CD4-positive, alpha-beta T cell (primary cell): ENCODE measurements at regions of chr1 and their contacts with region 1.

Region 1: GRCh38 chr1:27154991-27155781 is at the start of gene SLC9A1:
- DNase-seq: peak; percentile 86 to 97 (median 92)
- ATAC-seq: peak; percentile 93
- H3K4me3 ChIP-seq: peak within 1 kb of the TSS; percentile 93
- H3K4me3 Mint-ChIP-seq: peak within 1 kb of the TSS; percentile 89
- H3K27ac ChIP-seq: peak within 1 kb of the TSS; percentile 84 to 87
- H3K27ac Mint-ChIP-seq: peak within 1 kb of the TSS; percentile 98
- H3K4me1 ChIP-seq: peaks cover 48% of the 10 kb centered on the region
- H3K4me1 Mint-ChIP-seq: peaks cover 47% of the 10 kb centered on the region
- H3K27me3 ChIP-seq: no peaks in the 10 kb centered on the region
- H3K27me3 Mint-ChIP-seq: no peaks in the 10 kb centered on the region
- CTCF ChIP-seq: peak; percentile 80
- total RNA-seq, gene SLC9A1: 14.2 to 19.0 TPM

Region 2: DNA sequence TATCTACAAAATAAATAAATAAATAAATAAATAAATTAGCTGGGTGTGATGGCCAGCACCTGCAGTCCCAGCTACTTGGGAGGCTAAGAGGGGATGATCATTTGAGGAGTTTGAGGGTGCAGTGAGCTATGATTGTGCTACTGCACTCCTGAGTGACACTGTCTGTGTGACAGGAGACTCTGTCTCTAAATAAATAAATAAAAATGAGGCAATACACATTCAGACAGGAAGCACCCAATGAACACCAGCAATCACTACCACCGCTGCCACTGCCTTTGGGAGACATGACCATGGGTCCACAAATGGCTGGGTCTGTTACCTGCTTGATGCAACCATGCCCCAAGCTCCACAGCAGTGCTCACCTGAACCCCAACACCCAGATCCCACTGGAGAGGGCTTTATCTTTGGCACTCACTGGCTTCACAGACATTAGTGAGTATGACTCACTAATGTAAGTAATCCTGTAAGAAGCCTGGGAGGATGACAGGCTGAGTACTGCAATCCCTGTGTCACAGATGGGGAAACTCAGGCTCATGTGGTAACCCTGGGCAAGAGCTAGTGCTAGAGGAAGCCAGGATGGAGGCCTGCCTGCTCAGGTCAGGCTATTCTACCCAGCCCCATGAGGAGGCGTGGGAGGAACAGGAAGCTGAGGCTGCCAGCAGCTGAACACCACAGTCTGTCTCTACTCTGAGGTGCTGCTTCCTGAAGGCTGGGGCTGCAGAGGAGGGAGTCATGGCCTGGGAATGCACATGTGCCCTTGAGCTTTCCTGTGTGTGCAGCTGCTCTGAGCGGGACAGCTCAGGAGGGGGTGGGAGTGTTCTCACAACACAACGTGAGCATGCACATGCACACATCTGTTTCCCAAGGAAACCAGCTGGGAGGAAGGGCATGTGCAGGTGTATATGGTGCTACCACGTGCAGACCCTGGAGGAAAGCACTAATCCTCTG is 43.3 kb before region 1 on chr1:
- CTCF ChIA-PET with region 1: interaction called, 12 read pairs
- POLR2A ChIA-PET with region 1: interaction called, 35 read pairs
- intact Hi-C with region 1: loop called (anchors 1 to 2 kb)
- DNase-seq: peak; percentile 46 to 87 (median 66)
- ATAC-seq: peak; percentile 99
- H3K4me3 ChIP-seq: no peak overlapping the region
- H3K4me3 Mint-ChIP-seq: peak overlapping the region; percentile 79
- H3K27ac ChIP-seq: peak overlapping the region; percentile 49 to 83
- H3K27ac Mint-ChIP-seq: peak overlapping the region; percentile 90
- H3K4me1 ChIP-seq: peaks cover 68% of the 10 kb centered on the region
- H3K4me1 Mint-ChIP-seq: peaks cover 64% of the 10 kb centered on the region
- H3K27me3 ChIP-seq: no peaks in the 10 kb centered on the region
- H3K27me3 Mint-ChIP-seq: no peaks in the 10 kb centered on the region
- CTCF ChIP-seq: peak; percentile 64

Region 3: GRCh38 chr1:27136998-27137542 is 18.1 kb before region 1 on chr1:
- CTCF ChIA-PET with region 1: interaction called, 14 read pairs
- POLR2A ChIA-PET with region 1: interaction called, 179 read pairs
- intact Hi-C with region 1: loop called (anchors 1 kb)
- DNase-seq: peak; percentile 61 to 87 (median 80)
- ATAC-seq: peak; percentile 96
- H3K4me3 ChIP-seq: peak overlapping the region; percentile 49
- H3K4me3 Mint-ChIP-seq: peak overlapping the region; percentile 80
- H3K27ac ChIP-seq: peak overlapping the region; percentile 80 to 93
- H3K27ac Mint-ChIP-seq: peak overlapping the region; percentile 98
- H3K4me1 ChIP-seq: peaks cover 52% of the 10 kb centered on the region
- H3K4me1 Mint-ChIP-seq: peaks cover 62% of the 10 kb centered on the region
- H3K27me3 ChIP-seq: no peaks in the 10 kb centered on the region
- H3K27me3 Mint-ChIP-seq: no peaks in the 10 kb centered on the region
- CTCF ChIP-seq: no peak

Region 4: DNA sequence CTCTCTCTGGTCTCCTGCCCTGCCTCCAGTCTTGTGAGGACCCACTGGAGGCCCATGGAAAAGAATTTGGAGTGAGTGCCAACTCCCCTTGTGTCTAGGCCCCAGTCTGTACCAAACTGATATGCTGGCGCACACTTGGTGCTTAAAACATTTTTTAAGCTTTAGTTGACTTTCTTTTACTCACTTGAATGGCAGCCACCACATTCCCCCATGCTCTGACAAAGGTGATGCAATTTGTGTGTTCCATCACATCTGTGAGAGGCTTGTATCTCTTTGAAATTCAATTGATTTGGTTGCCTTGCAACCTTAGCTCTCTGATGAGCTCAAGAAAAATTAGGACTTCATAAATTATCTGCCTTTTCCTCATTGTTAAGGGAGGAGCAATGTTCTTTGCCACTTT is 48.8 kb after region 1 on chr1:
- CTCF ChIA-PET with region 1: no interaction called
- POLR2A ChIA-PET with region 1: no interaction called
- intact Hi-C with region 1: loop called in 1 of 2 experiments (anchors 2 kb)
- DNase-seq: no peak
- ATAC-seq: no peak
- H3K4me3 ChIP-seq: no peak overlapping the region
- H3K4me3 Mint-ChIP-seq: no peak overlapping the region
- H3K27ac ChIP-seq: no peak overlapping the region
- H3K27ac Mint-ChIP-seq: no peak overlapping the region
- H3K4me1 ChIP-seq: no peaks in the 10 kb centered on the region
- H3K4me1 Mint-ChIP-seq: no peaks in the 10 kb centered on the region
- H3K27me3 ChIP-seq: no peaks in the 10 kb centered on the region
- H3K27me3 Mint-ChIP-seq: no peaks in the 10 kb centered on the region
- CTCF ChIP-seq: no peak

Region 5: DNA sequence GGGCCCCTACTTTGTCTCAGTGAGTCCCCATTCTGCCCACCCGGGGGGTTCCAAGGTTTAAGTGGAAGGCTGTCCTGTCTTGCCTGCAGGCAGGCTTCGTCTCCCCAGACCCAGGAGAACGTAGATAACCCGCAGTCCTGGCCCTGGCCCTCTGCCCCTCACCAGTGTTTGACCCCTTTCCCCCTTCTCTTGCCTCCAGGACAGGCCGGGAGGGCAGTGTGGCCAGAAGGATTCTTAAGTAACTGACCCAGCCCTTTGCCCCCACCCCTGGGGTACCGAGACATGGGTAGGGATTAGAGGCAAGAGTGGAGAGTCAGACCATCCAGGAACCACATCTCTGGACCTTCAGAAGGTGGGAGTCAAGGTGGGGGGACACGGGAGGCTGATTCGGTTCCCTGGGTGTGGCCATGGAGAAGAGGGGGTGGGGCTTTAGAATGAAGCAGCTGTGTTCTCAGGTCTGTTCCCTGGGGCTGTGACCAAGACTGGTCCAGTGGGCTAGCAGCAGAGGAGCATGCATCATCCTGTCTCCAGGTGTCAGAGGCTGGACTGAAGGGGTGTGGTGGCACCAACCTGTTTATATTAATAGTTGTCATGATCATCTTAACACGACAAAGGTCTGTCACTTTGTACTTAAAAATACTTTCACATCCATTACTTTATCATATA is 175.7 kb after region 1 on chr1:
- CTCF ChIA-PET with region 1: no interaction called
- POLR2A ChIA-PET with region 1: no interaction called
- intact Hi-C with region 1: no loop called
- DNase-seq: no peak
- ATAC-seq: no peak
- H3K4me3 ChIP-seq: no peak overlapping the region
- H3K4me3 Mint-ChIP-seq: no peak overlapping the region
- H3K27ac ChIP-seq: no peak overlapping the region
- H3K27ac Mint-ChIP-seq: no peak overlapping the region
- H3K4me1 ChIP-seq: peaks cover 47% of the 10 kb centered on the region
- H3K4me1 Mint-ChIP-seq: peaks cover 43% of the 10 kb centered on the region
- H3K27me3 ChIP-seq: no peaks in the 10 kb centered on the region
- H3K27me3 Mint-ChIP-seq: no peaks in the 10 kb centered on the region
- CTCF ChIP-seq: no peak

Region 6: DNA sequence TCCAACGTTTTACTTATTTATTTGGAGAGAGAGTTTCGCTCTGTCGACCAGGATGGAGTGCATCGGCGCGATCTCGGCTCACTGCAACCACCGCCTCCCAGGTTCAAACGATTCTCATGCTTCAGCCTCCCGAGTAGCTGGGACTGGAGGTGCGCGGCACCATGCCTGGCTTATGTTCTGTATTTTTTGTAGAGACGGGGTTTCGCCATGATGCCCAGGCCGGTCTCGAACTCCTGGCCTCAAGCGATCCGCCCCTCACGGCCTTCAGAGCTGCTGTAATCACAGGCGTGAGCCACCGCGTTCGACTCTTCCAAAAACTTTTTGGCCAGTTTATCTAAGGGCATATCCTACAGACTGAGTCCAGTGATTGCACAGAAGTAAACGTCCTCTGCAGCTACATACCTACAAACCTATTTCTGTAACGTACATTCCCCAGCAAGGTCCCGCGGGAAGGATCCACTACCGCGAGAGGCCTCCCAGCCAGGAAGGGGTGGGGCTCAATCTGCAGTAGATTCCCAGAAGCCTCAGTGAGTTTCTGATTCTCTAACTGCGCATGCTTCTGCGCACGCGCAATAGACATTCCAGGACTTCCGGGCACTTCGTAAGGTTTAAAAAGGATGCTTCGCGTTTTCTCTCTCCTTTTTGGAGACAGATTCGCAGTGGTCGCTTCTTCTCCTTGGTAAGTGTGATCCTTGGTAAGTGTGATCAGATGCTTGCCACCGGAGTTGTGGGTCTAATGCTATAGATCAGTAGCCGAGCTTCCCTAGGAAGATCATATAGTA is 1350.4 kb after region 1 on chr1 and contains the start of gene RCC1:
- CTCF ChIA-PET with region 1: no interaction called
- POLR2A ChIA-PET with region 1: no interaction called
- intact Hi-C with region 1: no loop called
- DNase-seq: peak; percentile 86 to 99 (median 92)
- ATAC-seq: peak; percentile 92
- H3K4me3 ChIP-seq: peak within 1 kb of the TSS; percentile 86
- H3K4me3 Mint-ChIP-seq: peak within 1 kb of the TSS; percentile 94
- H3K27ac ChIP-seq: peak within 1 kb of the TSS; percentile 65 to 79
- H3K27ac Mint-ChIP-seq: peak within 1 kb of the TSS; percentile 88
- H3K4me1 ChIP-seq: peaks cover 38% of the 10 kb centered on the region
- H3K4me1 Mint-ChIP-seq: peaks cover 49% of the 10 kb centered on the region
- H3K27me3 ChIP-seq: no peaks in the 10 kb centered on the region
- H3K27me3 Mint-ChIP-seq: no peaks in the 10 kb centered on the region
- CTCF ChIP-seq: no peak
- total RNA-seq, gene RCC1: 8.5 to 9.9 TPM